CD8-positive, alpha-beta T cell (primary cell): ENCODE measurements at regions of chr4 and their contacts with region 1.

Region 1: DNA sequence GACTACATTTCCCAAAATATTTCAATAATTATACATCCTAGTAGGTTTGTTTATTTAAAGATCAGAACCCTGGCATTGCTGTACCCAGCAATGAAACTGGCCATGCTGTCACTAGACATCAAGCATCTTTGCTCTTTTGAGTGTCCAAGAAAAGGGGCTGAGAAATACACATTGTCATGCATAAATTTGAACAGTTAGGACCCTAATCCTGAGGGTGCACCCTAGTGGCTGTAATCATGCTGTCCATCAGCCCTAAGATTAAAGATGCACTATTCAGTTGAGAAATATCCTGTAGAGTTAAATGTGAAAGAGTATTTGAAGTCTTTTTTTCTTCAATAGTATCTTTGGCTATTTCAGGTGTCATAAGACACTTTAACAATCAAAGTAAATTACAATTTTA is 108.8 kb downstream of the NFKB1 start:
- DNase-seq: peak in 1 of 9 experiments; percentile 41
- ATAC-seq: no peak
- H3K4me3 ChIP-seq: no peak overlapping the region
- H3K4me3 Mint-ChIP-seq: no peak overlapping the region
- H3K27ac ChIP-seq: peak overlapping the region in 1 of 2 experiments; percentile 90
- H3K27ac Mint-ChIP-seq: peak overlapping the region; percentile 39
- H3K4me1 ChIP-seq: peaks cover 67% of the 10 kb centered on the region
- H3K4me1 Mint-ChIP-seq: peaks cover 78% of the 10 kb centered on the region
- H3K27me3 ChIP-seq: no peaks in the 10 kb centered on the region
- H3K27me3 Mint-ChIP-seq: no peaks in the 10 kb centered on the region
- CTCF ChIP-seq: no peak

Region 2: GRCh38 chr4:102578819-102579218 is 31.2 kb before region 1 on chr4:
- CTCF ChIA-PET with region 1: interaction called, 6 read pairs
- POLR2A ChIA-PET with region 1: interaction called, 3 read pairs
- intact Hi-C with region 1: loop called in 1 of 2 experiments (anchors 5 kb)
- DNase-seq: peak in 2 of 9 experiments; percentile 44 to 53
- ATAC-seq: peak; percentile 22
- H3K4me3 ChIP-seq: no peak overlapping the region
- H3K4me3 Mint-ChIP-seq: no peak overlapping the region
- H3K27ac ChIP-seq: no peak overlapping the region
- H3K27ac Mint-ChIP-seq: no peak overlapping the region
- H3K4me1 ChIP-seq: peaks cover 40% of the 10 kb centered on the region
- H3K4me1 Mint-ChIP-seq: peaks cover 67% of the 10 kb centered on the region
- H3K27me3 ChIP-seq: no peaks in the 10 kb centered on the region
- H3K27me3 Mint-ChIP-seq: no peaks in the 10 kb centered on the region
- CTCF ChIP-seq: no peak

Region 3: GRCh38 chr4:102598086-102598761 is 11.8 kb before region 1 on chr4:
- CTCF ChIA-PET with region 1: interaction called, 3 read pairs
- POLR2A ChIA-PET with region 1: interaction called, 6 read pairs
- intact Hi-C with region 1: loop called in 1 of 2 experiments (anchors 1 kb)
- DNase-seq: peak in 2 of 9 experiments; percentile 53 to 71
- ATAC-seq: peak; percentile 84
- H3K4me3 ChIP-seq: peak overlapping the region in 1 of 2 experiments; percentile 7
- H3K4me3 Mint-ChIP-seq: peak overlapping the region; percentile 24
- H3K27ac ChIP-seq: peak overlapping the region; percentile 12 to 52
- H3K27ac Mint-ChIP-seq: peak overlapping the region; percentile 90
- H3K4me1 ChIP-seq: peaks cover 62% of the 10 kb centered on the region
- H3K4me1 Mint-ChIP-seq: peaks cover 74% of the 10 kb centered on the region
- H3K27me3 ChIP-seq: no peaks in the 10 kb centered on the region
- H3K27me3 Mint-ChIP-seq: no peaks in the 10 kb centered on the region
- CTCF ChIP-seq: no peak

Region 4: GRCh38 chr4:103099691-103100392 is 489.8 kb after region 1 on chr4 and contains the start of gene BDH2:
- CTCF ChIA-PET with region 1: no interaction called
- POLR2A ChIA-PET with region 1: no interaction called
- intact Hi-C with region 1: no loop called
- DNase-seq: peak in 8 of 9 experiments; percentile 3 to 91 (median 48)
- ATAC-seq: peak; percentile 99
- H3K4me3 ChIP-seq: peak within 1 kb of the TSS; percentile 51 to 60
- H3K4me3 Mint-ChIP-seq: peak within 1 kb of the TSS; percentile 85
- H3K27ac ChIP-seq: peak within 1 kb of the TSS; percentile 4 to 37
- H3K27ac Mint-ChIP-seq: peak within 1 kb of the TSS; percentile 92
- H3K4me1 ChIP-seq: peaks cover 15% of the 10 kb centered on the region
- H3K4me1 Mint-ChIP-seq: peaks cover 41% of the 10 kb centered on the region
- H3K27me3 ChIP-seq: no peaks in the 10 kb centered on the region
- H3K27me3 Mint-ChIP-seq: no peaks in the 10 kb centered on the region
- CTCF ChIP-seq: peak; percentile 78
- total RNA-seq, gene BDH2: 16.4 to 19.9 TPM